ENCODE measurements at regions of chr2 and their contacts with region 1.

Region 1: GRCh38 chr2:122451040-122451439 is 695.6 kb downstream of the TSN start:
- DNase-seq: no peak
- ATAC-seq: no peak
- H3K4me3 ChIP-seq: no peak overlapping the region
- H3K4me3 Mint-ChIP-seq: peak overlapping the region in 1 of 10 donors; percentile 52
- H3K27ac ChIP-seq: no peak overlapping the region
- H3K27ac Mint-ChIP-seq: no peak overlapping the region
- H3K4me1 ChIP-seq: no peaks in the 10 kb centered on the region
- H3K4me1 Mint-ChIP-seq: peaks cover 0 to 1% (median 0%) of the 10 kb centered on the region in 7 donors
- H3K27me3 ChIP-seq: no peaks in the 10 kb centered on the region
- H3K27me3 Mint-ChIP-seq: peaks cover 0 to 10% (median 0%) of the 10 kb centered on the region in 5 donors

Region 2: GRCh38 chr2:121080013-121080772 is 1370.8 kb before region 1 on chr2:
- CTCF ChIA-PET with region 1: no interaction called
- POLR2A ChIA-PET with region 1: no interaction called
- intact Hi-C with region 1: loop called in 1 of 2 experiments (anchors 10 kb)
- DNase-seq: peak in 5 of 9 donors; percentile 7 to 47 (median 23)
- ATAC-seq: peak; percentile 31
- H3K4me3 ChIP-seq: no peak overlapping the region
- H3K4me3 Mint-ChIP-seq: no peak overlapping the region
- H3K27ac ChIP-seq: no peak overlapping the region
- H3K27ac Mint-ChIP-seq: no peak overlapping the region
- H3K4me1 ChIP-seq: no peaks in the 10 kb centered on the region
- H3K4me1 Mint-ChIP-seq: peaks cover 0 to 3% (median 0%) of the 10 kb centered on the region in 7 donors
- H3K27me3 ChIP-seq: no peaks in the 10 kb centered on the region
- H3K27me3 Mint-ChIP-seq: peaks cover 17 to 50% (median 30%) of the 10 kb centered on the region in 5 donors

Region 3: DNA sequence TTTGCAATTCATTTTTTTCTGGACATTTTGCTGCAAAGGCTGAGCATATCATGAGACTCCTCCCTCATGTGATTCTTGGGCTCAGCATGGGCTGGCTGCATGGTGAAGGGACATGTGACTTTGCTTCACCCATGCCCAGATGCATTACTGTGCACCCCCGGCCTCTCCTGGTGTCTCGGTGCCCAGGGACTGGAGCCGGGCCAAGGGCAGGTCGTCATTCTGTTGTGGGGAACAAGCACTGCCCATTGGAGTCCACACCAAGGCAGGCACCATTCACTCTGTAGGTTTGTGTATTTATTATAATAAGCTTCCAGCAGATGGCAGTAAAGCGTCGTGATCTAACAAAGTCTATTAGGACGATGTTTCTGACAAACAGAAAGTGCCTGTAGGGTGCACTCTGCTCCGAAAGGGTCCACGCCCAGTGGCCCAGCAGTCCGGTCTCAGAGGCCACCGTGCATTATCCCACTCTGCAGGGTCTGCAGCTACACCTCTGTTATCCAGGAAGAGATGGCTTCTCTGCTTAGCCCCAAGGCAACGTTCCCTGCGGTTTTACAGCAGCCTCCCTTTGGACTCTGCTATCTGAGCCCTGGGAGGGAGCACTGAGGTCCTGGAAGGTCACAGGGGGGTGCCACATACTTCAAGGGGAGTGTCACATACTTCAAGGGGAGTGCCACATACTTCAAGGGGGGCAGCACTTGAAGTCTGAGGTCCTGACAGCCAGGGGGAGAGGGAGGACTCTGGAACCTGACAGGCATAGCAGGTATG is 476.0 kb before region 1 on chr2:
- CTCF ChIA-PET with region 1: no interaction called
- POLR2A ChIA-PET with region 1: no interaction called
- intact Hi-C with region 1: loop called in 1 of 2 experiments (anchors 1 kb)
- DNase-seq: peak; percentile 12 to 70 (median 59)
- ATAC-seq: peak; percentile 90
- H3K4me3 ChIP-seq: peak overlapping the region; percentile 68
- H3K4me3 Mint-ChIP-seq: peak overlapping the region; percentile 71 to 87 (median 82)
- H3K27ac ChIP-seq: no peak overlapping the region
- H3K27ac Mint-ChIP-seq: peak overlapping the region in 3 of 9 donors; percentile 21 to 66 (median 25)
- H3K4me1 ChIP-seq: peaks cover 0 to 4% of the 10 kb centered on the region in 2 donors
- H3K4me1 Mint-ChIP-seq: peaks cover 6 to 11% (median 8%) of the 10 kb centered on the region in 7 donors
- H3K27me3 ChIP-seq: no peaks in the 10 kb centered on the region
- H3K27me3 Mint-ChIP-seq: peaks cover 0 to 20% (median 8%) of the 10 kb centered on the region in 5 donors

Region 4: GRCh38 chr2:122414911-122415310 is 36.1 kb before region 1 on chr2:
- CTCF ChIA-PET with region 1: no interaction called
- POLR2A ChIA-PET with region 1: no interaction called
- intact Hi-C with region 1: no loop called
- DNase-seq: no peak
- ATAC-seq: no peak
- H3K4me3 ChIP-seq: no peak overlapping the region
- H3K4me3 Mint-ChIP-seq: no peak overlapping the region
- H3K27ac ChIP-seq: no peak overlapping the region
- H3K27ac Mint-ChIP-seq: no peak overlapping the region
- H3K4me1 ChIP-seq: no peaks in the 10 kb centered on the region
- H3K4me1 Mint-ChIP-seq: no peaks in the 10 kb centered on the region
- H3K27me3 ChIP-seq: no peaks in the 10 kb centered on the region
- H3K27me3 Mint-ChIP-seq: peaks cover 0 to 6% (median 0%) of the 10 kb centered on the region in 5 donors

Region 5: DNA sequence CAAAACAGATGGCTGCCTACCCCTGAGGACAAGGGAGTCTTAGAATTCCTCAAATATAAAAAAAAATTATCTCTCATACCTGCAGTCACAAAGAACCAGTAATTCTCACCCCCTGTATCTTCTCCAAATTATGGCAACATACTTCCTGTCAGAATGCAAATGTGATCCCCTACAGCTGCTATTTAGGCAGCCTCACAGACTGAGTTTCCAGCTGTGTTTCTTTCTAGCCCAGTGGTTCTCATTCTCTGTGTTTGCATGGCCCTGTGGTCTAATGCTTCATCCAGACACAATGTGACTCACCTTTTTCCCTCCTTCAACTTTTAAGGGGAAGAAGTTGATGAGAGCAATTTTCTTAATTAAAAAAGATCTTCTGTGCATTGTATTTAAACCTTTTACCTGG is 30.7 kb after region 1 on chr2:
- CTCF ChIA-PET with region 1: no interaction called
- POLR2A ChIA-PET with region 1: no interaction called
- intact Hi-C with region 1: no loop called
- DNase-seq: no peak
- ATAC-seq: no peak
- H3K4me3 ChIP-seq: no peak overlapping the region
- H3K4me3 Mint-ChIP-seq: no peak overlapping the region
- H3K27ac ChIP-seq: no peak overlapping the region
- H3K27ac Mint-ChIP-seq: no peak overlapping the region
- H3K4me1 ChIP-seq: no peaks in the 10 kb centered on the region
- H3K4me1 Mint-ChIP-seq: no peaks in the 10 kb centered on the region
- H3K27me3 ChIP-seq: no peaks in the 10 kb centered on the region
- H3K27me3 Mint-ChIP-seq: peaks cover 0 to 3% (median 0%) of the 10 kb centered on the region in 5 donors

Region 6: GRCh38 chr2:122764014-122764413 is 313.0 kb after region 1 on chr2:
- CTCF ChIA-PET with region 1: no interaction called
- POLR2A ChIA-PET with region 1: no interaction called
- intact Hi-C with region 1: no loop called
- DNase-seq: no peak
- ATAC-seq: peak; percentile 34
- H3K4me3 ChIP-seq: no peak overlapping the region
- H3K4me3 Mint-ChIP-seq: no peak overlapping the region
- H3K27ac ChIP-seq: no peak overlapping the region
- H3K27ac Mint-ChIP-seq: no peak overlapping the region
- H3K4me1 ChIP-seq: no peaks in the 10 kb centered on the region
- H3K4me1 Mint-ChIP-seq: no peaks in the 10 kb centered on the region
- H3K27me3 ChIP-seq: no peaks in the 10 kb centered on the region
- H3K27me3 Mint-ChIP-seq: no peaks in the 10 kb centered on the region